A673 (cell line): ENCODE measurements at regions of chr20 and their contacts with region 1.

Region 1: GRCh38 chr20:48904365-48905296 is 16.9 kb upstream of the ARFGEF2 start:
- DNase-seq: peak; percentile 88
- H3K4me3 ChIP-seq: peak overlapping the region; percentile 7
- H3K27ac ChIP-seq: peak overlapping the region; percentile 82
- H3K4me1 ChIP-seq: peaks cover 21% of the 10 kb centered on the region
- H3K27me3 ChIP-seq: no peaks in the 10 kb centered on the region
- CTCF ChIP-seq: peak; percentile 87

Region 2: DNA sequence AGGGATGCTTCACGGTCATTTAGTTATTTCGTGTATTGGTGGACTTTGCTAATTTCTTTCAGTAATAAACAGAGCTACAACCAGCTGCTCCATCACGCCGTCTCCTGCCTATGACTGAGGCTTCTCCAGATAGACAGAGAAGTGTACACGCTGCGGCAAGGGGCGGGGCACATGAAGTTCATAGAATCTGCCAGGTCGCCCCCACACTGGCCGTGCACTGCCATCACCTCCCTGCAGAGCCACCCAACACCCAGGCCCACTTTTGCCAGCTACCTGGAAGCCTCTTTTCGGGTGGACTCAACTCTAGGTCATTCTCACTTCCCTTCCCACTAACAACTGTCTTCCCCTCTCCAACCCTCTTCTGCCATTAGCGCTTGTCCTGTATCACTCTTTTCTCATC is 1207.8 kb before region 1 on chr20:
- CTCF ChIA-PET with region 1: interaction called, 15 read pairs
- POLR2A ChIA-PET with region 1: no interaction called
- intact Hi-C with region 1: no loop called
- DNase-seq: no peak
- H3K4me3 ChIP-seq: no peak overlapping the region
- H3K27ac ChIP-seq: no peak overlapping the region
- H3K4me1 ChIP-seq: no peaks in the 10 kb centered on the region
- H3K27me3 ChIP-seq: no peaks in the 10 kb centered on the region
- CTCF ChIP-seq: no peak

Region 3: DNA sequence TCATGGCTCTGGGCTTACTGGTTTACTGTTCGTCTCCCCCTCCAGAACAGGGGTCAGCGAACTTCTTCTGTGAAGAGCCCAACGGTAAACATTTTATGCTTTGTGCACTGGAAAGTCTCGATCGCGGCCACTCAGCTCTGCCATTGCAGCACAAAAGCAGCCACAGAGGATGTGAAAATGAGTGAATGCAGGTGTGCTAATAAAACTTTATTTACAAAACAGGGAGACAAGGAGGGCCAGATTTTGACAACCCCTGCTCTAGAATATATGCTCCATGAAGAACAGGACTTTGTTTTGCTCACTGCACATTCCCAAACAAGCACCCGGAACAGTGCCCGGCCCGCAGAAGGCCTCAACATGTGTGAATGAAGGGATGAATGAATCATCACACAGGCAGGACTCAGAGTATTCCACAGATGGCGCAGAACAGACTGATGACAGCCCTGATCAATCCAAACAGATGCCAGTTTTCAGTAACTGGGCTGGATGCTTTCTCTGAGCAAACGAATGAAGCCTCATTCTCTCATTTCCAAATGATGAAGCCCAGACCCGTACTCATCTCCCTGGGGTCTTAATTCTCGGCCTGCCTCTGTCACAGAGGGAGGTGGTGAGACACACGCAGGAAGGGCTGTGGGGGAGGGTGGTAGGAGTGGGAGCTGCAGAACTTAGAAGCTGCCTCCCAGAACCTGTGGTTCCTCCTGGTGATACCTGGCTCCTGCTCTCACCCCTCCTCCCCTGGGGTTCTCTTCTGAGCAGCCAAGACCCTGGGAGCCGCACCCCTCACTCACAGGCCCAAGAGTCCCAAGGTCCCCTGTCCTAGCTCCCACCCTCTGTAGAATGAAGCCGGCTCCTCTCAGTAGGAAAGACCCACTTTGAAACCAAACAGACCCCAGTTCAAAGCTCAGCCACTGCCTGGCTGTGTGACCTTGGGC is 273.3 kb before region 1 on chr20:
- CTCF ChIA-PET with region 1: no interaction called
- POLR2A ChIA-PET with region 1: no interaction called
- intact Hi-C with region 1: loop called (anchors 5 kb)
- DNase-seq: no peak
- H3K4me3 ChIP-seq: no peak overlapping the region
- H3K27ac ChIP-seq: no peak overlapping the region
- H3K4me1 ChIP-seq: peaks cover 3% of the 10 kb centered on the region
- H3K27me3 ChIP-seq: no peaks in the 10 kb centered on the region
- CTCF ChIP-seq: no peak

Region 4: DNA sequence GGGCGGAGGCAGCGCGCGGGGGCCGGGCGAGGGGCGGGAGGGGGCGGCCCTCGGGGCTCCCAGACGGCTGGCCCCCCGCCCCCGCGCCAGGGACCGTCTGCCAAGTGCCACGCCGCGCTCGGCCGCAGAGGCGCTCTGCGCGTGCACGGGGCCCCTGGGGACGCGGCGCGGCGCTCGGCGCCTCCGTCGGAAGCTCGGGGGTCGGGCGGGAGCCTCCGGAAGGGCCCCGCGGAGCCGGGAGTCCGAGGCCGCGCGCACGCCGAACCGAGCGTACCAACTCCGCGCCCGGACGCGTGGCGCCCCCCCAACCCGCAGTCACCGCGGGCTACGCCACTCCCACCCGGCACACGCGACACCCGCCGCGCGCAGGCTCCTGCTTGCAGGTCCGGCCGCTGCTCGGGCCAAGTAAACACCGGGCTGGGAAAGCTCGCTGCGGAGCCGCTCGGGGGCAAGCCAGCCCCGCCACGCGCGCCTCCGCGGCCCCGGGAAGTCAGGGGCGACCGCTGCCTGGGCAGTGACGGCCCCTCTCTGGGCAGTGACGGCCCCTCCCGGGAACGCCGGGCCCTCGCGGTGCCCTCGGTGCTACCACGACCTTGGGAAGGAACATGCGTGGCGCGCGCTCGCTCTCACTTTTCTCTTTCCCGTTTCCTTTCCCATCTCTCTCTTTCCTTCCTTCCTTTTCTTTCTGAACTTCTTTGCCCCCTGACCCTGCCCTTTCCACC is 76.4 kb before region 1 on chr20:
- CTCF ChIA-PET with region 1: interaction called, 18 read pairs
- POLR2A ChIA-PET with region 1: no interaction called
- intact Hi-C with region 1: no loop called
- DNase-seq: peak; percentile 96
- H3K4me3 ChIP-seq: peak overlapping the region; percentile 64
- H3K27ac ChIP-seq: peak overlapping the region; percentile 98
- H3K4me1 ChIP-seq: peaks cover 57% of the 10 kb centered on the region
- H3K27me3 ChIP-seq: no peaks in the 10 kb centered on the region
- CTCF ChIP-seq: no peak

Region 5: GRCh38 chr20:48892844-48893243 is 11.8 kb before region 1 on chr20:
- CTCF ChIA-PET with region 1: interaction called, 22 read pairs
- POLR2A ChIA-PET with region 1: no interaction called
- intact Hi-C with region 1: no loop called
- DNase-seq: peak; percentile 86
- H3K4me3 ChIP-seq: no peak overlapping the region
- H3K27ac ChIP-seq: peak overlapping the region; percentile 97
- H3K4me1 ChIP-seq: peaks cover 55% of the 10 kb centered on the region
- H3K27me3 ChIP-seq: no peaks in the 10 kb centered on the region
- CTCF ChIP-seq: no peak

Region 6: DNA sequence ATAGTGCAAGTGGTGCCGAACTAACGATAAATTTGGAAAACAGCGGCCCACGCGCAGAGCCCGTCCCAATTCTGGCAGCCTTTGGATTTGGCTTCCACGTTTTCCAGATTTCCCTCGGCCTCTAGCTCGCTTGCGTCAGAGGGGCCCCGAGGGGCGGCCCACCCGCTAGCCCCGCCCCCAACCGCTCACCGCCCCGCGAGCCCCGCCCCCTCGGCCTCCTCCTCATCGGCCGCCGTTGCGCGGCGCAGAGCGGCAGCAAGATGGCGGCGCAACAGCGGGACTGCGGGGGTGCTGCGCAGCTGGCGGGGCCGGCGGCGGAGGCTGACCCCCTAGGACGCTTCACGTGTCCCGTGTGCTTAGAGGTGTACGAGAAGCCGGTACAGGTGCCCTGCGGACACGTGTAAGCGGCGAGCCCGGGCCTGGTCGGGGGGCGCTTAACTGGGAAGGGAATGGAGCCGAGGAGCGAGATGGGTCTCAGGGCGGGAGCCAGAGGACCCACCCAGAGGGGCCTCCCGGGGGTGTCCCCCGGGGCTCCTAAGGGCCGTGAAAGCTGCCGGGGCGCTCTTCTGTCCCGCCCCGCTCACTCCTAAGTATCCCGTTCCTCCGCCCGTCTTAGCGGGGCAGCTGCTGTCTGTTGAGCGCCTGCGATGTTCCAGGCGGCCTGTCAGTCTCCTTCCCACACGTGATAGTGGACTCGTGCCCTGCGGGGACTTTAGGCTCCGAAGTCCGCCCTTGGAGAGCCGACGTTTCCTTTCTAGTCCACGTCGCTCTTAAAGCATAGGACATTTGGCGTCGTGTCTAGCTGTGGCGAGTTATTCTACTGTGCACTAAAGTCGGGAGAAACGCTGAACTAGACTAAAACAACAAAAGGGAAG is 1031.8 kb after region 1 on chr20 and contains the start of gene RNF114:
- CTCF ChIA-PET with region 1: no interaction called
- POLR2A ChIA-PET with region 1: interaction called, 15 read pairs
- intact Hi-C with region 1: no loop called
- DNase-seq: peak; percentile 95
- H3K4me3 ChIP-seq: peak within 1 kb of the TSS; percentile 90
- H3K27ac ChIP-seq: peak within 1 kb of the TSS; percentile 88
- H3K4me1 ChIP-seq: peaks cover 16% of the 10 kb centered on the region
- H3K27me3 ChIP-seq: no peaks in the 10 kb centered on the region
- CTCF ChIP-seq: no peak
- total RNA-seq, gene RNF114: 83.6 and 90.0 TPM in 2 replicates